ENCODE measurements at regions of chr3 and their contacts with region 1.

Region 1: DNA sequence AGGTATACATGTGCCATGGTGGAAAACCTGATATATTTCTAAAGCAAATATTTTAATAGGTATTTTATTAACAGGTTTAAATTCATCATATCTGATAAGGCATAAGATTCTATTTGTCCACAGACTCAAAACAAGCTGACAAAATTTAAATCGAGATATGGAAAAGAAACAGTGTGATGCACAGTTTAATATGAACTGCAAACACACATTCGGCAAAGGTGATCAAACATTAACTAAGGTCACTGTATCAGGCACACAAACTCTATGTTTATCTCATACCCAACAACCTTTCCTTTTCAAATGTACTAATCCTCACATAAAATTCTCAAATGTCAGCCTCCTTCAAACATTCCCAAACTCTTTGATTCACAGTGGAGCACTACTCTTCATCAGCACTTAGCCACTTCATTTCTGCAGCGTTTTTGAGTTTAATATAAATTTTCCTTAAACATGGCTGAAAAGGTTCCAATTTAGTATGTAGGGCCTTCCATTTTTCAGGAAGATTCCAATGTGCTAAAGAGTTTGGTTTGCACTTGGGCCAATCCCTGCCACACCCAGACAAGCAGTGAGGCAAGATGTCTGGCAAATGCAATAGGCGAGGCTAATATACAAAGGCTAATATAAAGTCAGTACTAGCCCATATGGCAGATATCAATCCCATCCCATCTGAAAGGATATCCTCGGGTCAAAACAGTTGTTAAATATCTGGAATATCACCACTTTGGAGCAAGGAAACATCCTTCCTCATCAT is 84.6 kb downstream of the GBE1 start:
- DNase-seq: no peak
- ATAC-seq: no peak
- H3K4me3 ChIP-seq: no peak overlapping the region
- H3K27ac ChIP-seq: no peak overlapping the region
- H3K4me1 ChIP-seq: no peaks in the 10 kb centered on the region
- H3K27me3 ChIP-seq: no peaks in the 10 kb centered on the region
- CTCF ChIP-seq: no peak

Region 2: GRCh38 chr3:81743096-81744025 is 66.5 kb after region 1 on chr3:
- intact Hi-C with region 1: no loop called
- DNase-seq: peak in 1 of 2 donors; percentile 46
- ATAC-seq: peak; percentile 43 to 73 (median 66)
- H3K4me3 ChIP-seq: no peak overlapping the region
- H3K27ac ChIP-seq: peak overlapping the region; percentile 9 to 87 (median 74)
- H3K4me1 ChIP-seq: peaks cover 10 to 68% (median 50%) of the 10 kb centered on the region in 9 donors
- H3K27me3 ChIP-seq: no peaks in the 10 kb centered on the region
- CTCF ChIP-seq: no peak

Region 3: DNA sequence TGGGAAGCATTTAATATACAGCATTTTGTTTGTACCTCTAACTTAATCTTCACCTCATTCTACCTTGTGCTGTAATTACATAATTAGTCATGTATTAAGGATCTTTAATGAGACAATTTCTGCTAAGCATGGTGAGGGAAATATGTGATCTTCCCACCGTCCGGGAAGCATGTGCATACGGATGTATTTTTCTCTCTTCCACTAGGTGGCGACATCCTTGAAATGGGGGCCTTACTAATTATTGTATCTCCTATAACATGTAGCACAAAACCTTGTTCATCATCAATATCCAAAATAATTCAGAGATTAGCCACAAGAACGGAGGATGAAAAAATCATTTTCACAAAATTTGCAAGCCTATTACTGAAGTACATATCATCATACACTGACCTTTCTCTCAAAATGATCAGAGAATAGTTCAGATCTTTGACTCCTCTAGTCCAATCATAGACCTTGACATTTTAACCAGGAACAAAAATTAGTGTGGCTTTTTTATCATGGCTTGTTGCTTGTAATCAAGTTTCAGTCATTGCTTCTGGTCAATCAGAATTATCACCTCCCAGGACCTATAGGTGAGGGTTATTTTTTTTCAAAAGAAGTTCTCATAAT is 233.5 kb after region 1 on chr3:
- intact Hi-C with region 1: loop called in 1 of 10 experiments (anchors 10 kb)
- DNase-seq: peak in 1 of 2 donors; percentile 16
- ATAC-seq: peak in 1 of 8 donors; percentile 39
- H3K4me3 ChIP-seq: no peak overlapping the region
- H3K27ac ChIP-seq: no peak overlapping the region
- H3K4me1 ChIP-seq: peaks cover 0 to 4% (median 0%) of the 10 kb centered on the region in 9 donors
- H3K27me3 ChIP-seq: no peaks in the 10 kb centered on the region
- CTCF ChIP-seq: peak; percentile 72 to 84 (median 77)

Measured in heart right ventricle (tissue), 16 donors.